Adrenal gland (tissue), 19 donors: ENCODE measurements at regions of chr18 and their contacts with region 1.

Region 1: GRCh38 chr18:21257386-21257785 is 15.4 kb downstream of the GREB1L start:
- DNase-seq: no peak
- H3K4me3 ChIP-seq: no peak overlapping the region
- H3K27ac ChIP-seq: no peak overlapping the region
- H3K4me1 ChIP-seq: no peaks in the 10 kb centered on the region
- H3K27me3 ChIP-seq: no peaks in the 10 kb centered on the region
- CTCF ChIP-seq: no peak
- POLR2A ChIP-seq: no peak

Region 2: DNA sequence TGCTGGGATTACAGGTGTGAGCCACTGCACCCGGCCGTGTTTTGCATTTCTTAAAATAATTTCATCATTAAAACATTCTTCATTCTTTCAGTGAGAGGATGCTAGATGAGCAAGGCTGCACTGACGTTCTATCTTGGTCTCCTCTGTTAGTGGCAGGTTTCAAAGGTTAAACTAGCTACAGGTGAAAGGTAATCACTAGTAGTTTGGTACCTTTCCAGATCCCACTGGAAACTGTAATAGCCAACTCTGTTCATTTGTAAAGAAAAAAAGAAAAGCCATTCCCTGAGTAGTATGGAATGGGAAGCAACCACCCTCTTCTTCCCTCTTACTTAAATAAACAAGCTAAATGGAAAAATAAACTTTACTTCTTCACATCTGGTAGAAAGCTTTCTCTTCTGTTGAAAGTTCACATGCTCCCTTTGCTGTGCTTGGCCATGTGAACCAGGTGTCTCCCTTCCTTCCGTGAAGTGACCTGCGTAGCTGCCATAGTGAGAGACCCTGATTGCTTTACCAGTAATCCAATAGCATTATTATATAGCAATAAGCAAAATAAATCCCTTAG is 78.6 kb after region 1 on chr18:
- intact Hi-C with region 1: loop called in 1 of 2 experiments (anchors 5 kb)
- DNase-seq: no peak
- H3K4me3 ChIP-seq: no peak overlapping the region
- H3K27ac ChIP-seq: no peak overlapping the region
- H3K4me1 ChIP-seq: no peaks in the 10 kb centered on the region
- H3K27me3 ChIP-seq: no peaks in the 10 kb centered on the region
- CTCF ChIP-seq: no peak
- POLR2A ChIP-seq: no peak